ENCODE measurements at regions of chr4 and their contacts with region 1.

Region 1: GRCh38 chr4:20395160-20395773 is 143.6 kb downstream of the SLIT2 start:
- DNase-seq: no peak
- H3K4me3 ChIP-seq: no peak overlapping the region
- CTCF ChIP-seq: peak; percentile 40

Region 2: DNA sequence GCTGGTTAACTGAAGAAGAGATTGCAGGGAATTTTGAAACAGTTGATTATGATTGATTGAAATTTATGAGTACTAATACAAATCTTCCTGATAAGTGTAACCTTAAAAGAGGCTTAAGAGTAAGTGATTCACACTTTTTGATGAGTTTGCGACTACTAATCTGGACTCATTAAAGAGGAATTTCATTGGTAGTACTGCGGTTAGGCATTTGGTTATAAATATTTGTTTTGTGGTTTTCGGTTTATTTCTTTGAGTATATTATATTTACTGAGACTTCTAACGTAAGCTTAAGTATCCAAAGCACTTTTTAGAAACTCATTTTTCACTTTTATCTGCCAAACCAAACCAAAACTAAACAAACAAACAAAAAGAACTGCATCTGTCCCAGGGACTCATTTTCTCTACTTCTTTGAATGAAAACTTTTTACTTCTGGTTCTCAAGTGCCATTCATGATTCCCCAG is 122.8 kb before region 1 on chr4:
- CTCF ChIA-PET with region 1: no interaction called
- POLR2A ChIA-PET with region 1: no interaction called
- DNase-seq: no peak
- H3K4me3 ChIP-seq: no peak overlapping the region
- CTCF ChIP-seq: no peak

Region 3: GRCh38 chr4:20378181-20378580 is 17.1 kb before region 1 on chr4:
- CTCF ChIA-PET with region 1: interaction called, 17 read pairs
- POLR2A ChIA-PET with region 1: no interaction called
- DNase-seq: no peak
- H3K4me3 ChIP-seq: no peak overlapping the region
- CTCF ChIP-seq: no peak

Region 4: GRCh38 chr4:20408611-20409010 is 13.3 kb after region 1 on chr4:
- CTCF ChIA-PET with region 1: interaction called, 19 read pairs
- POLR2A ChIA-PET with region 1: interaction called, 3 read pairs
- DNase-seq: no peak
- H3K4me3 ChIP-seq: no peak overlapping the region
- CTCF ChIP-seq: no peak

Measured in AG04449 (cell line).